ENCODE measurements at regions of chr16 and their contacts with region 1.

Region 1: DNA sequence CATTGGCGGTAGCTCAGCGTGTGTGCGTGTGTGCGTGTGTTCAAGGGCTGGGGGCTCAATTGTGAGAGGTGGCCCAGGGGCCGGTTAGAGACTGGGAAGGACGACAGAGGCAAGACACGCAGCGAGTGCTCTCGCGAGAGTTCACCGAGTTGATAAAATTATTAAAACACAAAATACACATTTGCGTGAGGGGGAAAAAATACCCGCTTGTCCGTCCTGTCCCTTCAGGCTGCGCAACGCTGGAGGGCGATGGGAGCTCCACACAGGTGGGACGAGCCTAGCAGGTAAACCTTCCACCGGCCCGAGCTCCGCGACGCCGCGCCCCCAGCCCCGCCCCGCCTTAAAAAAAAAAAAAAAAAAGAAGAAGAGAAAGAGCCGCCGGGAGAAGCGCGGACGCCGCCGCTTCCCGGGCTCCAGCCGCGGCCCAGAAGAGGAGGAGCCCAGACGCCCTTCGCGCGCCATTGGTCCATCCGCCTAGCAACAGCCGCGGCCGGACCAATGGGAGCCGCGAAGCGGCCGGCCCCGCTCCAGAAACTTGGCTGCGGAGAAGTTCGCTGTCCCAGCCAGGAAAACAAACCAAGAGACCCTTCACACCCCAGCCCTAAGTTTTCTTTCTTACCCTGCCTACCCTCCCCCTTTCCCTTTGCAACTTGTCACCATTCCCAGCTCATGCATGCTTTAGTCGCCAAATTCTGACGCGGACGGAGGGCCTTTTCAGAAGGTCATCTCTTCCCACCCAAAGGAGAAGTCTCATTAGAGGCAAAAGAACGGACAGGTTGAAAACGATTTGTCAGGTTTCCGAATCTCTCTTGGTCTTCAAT is 169.9 kb upstream of the MAF start:
- DNase-seq: peak; percentile 92
- H3K4me3 Mint-ChIP-seq: peak overlapping the region; percentile 88
- H3K27ac Mint-ChIP-seq: peak overlapping the region; percentile 21
- H3K4me1 Mint-ChIP-seq: peaks cover 10% of the 10 kb centered on the region
- H3K27me3 Mint-ChIP-seq: no peaks in the 10 kb centered on the region
- CTCF ChIP-seq: no peak

Region 2: DNA sequence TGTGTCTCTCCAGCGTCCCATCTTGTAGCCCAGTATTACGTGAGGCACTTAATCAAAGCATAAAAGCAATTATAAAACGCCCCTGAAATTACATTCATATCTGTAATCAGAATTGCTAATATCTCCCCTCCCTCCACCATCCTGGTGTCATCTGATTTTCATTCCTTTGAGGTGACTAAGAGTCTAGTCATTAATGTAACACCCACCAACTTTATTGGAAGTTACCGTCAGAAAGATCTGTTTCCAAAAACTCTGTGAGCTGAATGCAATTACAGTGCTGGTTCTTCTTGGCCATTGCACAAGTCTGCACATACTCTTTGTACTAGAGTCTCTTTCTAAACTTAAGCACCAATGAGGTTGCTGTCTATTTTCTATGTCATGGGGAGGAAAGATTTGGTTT is 157.4 kb before region 1 on chr16:
- CTCF ChIA-PET with region 1: no interaction called
- POLR2A ChIA-PET with region 1: no interaction called
- intact Hi-C with region 1: loop called (anchors 5 kb)
- DNase-seq: peak; percentile 41
- H3K4me3 Mint-ChIP-seq: no peak overlapping the region
- H3K27ac Mint-ChIP-seq: peak overlapping the region; percentile 74
- H3K4me1 Mint-ChIP-seq: peaks cover 40% of the 10 kb centered on the region
- H3K27me3 Mint-ChIP-seq: no peaks in the 10 kb centered on the region
- CTCF ChIP-seq: no peak

Region 3: GRCh38 chr16:79735271-79735670 is 35.2 kb before region 1 on chr16:
- CTCF ChIA-PET with region 1: no interaction called
- POLR2A ChIA-PET with region 1: no interaction called
- intact Hi-C with region 1: no loop called
- DNase-seq: no peak
- H3K4me3 Mint-ChIP-seq: no peak overlapping the region
- H3K27ac Mint-ChIP-seq: no peak overlapping the region
- H3K4me1 Mint-ChIP-seq: no peaks in the 10 kb centered on the region
- H3K27me3 Mint-ChIP-seq: no peaks in the 10 kb centered on the region
- CTCF ChIP-seq: no peak

Region 4: DNA sequence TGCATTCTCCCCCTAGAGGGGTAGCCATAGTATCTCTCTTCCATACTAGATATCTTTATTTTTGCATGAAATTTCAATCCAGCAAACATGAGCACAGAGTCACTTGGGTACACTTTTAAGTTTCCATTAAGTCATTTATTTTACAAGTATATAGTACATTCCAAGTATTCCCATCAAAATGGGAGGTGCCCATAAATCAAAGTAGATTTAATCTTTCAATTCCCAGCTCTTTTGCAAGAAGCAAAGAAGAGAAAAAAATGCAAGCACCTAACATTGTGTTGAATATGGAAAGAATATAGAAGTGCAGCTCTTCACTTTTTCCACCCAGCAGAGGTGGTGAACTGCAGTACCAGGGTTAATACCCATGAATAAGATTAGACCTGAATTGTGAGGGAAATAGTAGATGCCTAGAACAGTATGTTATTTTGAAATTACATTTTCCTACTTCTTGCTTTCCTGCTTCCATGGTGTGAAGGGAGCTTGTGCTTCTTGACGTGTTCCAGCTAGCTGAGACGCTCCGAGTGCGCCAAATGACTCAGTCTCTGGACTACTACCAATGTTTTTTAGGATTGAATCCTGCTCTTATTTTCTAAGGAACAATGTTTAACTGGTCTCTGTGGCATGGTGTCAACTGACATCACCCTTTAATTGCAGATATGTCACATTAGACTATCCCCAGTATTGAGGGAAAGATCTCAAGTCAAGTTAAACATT is 18.8 kb before region 1 on chr16:
- CTCF ChIA-PET with region 1: interaction called, 4 read pairs
- POLR2A ChIA-PET with region 1: interaction called, 11 read pairs
- intact Hi-C with region 1: no loop called
- DNase-seq: peak; percentile 79
- H3K4me3 Mint-ChIP-seq: peak overlapping the region; percentile 17
- H3K27ac Mint-ChIP-seq: peak overlapping the region; percentile 9
- H3K4me1 Mint-ChIP-seq: peaks cover 39% of the 10 kb centered on the region
- H3K27me3 Mint-ChIP-seq: no peaks in the 10 kb centered on the region
- CTCF ChIP-seq: no peak

Region 5: GRCh38 chr16:79758615-79759341 is 11.7 kb before region 1 on chr16:
- CTCF ChIA-PET with region 1: interaction called, 4 read pairs
- POLR2A ChIA-PET with region 1: interaction called, 10 read pairs
- intact Hi-C with region 1: no loop called
- DNase-seq: peak; percentile 51
- H3K4me3 Mint-ChIP-seq: peak overlapping the region; percentile 35
- H3K27ac Mint-ChIP-seq: peak overlapping the region; percentile 30
- H3K4me1 Mint-ChIP-seq: peaks cover 34% of the 10 kb centered on the region
- H3K27me3 Mint-ChIP-seq: no peaks in the 10 kb centered on the region
- CTCF ChIP-seq: no peak

Region 6: DNA sequence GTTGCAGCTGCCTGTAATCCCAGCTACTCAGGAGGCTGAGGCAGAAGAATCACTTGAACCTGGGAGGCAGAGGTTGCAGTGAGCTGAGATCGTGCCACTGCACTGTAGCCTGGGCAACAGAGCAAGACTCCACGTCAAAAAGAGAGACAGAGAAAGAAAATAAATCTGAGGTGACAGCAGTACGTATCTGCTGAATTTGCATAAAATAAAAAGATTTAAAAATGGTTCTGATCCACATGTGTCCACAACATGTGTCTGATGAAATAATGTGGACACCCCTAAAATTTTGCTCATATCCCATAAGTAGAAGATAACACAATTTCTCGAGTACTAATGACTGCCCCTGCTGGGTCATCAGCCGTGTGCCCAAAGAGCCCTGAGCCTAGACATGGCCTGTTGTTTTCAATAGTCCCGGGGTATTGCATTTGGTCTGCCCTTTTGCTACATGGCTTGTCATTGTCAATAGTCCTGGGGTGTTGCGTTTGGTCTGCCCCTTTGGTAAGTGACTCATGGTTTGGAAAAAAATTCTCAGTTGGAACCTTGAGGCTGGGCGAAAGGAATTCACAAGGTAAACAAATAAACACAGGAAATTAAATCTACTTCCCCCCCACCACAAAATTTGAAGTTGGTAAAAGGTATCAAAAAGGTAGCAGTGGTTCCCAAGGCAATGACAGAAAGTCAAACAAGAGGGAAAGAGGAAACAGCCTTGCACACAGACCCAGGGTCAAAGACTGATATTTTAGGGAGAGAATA is 264.7 kb after region 1 on chr16:
- CTCF ChIA-PET with region 1: no interaction called
- POLR2A ChIA-PET with region 1: no interaction called
- intact Hi-C with region 1: no loop called
- DNase-seq: peak; percentile 18
- H3K4me3 Mint-ChIP-seq: no peak overlapping the region
- H3K27ac Mint-ChIP-seq: no peak overlapping the region
- H3K4me1 Mint-ChIP-seq: peaks cover 7% of the 10 kb centered on the region
- H3K27me3 Mint-ChIP-seq: no peaks in the 10 kb centered on the region
- CTCF ChIP-seq: no peak

Measured in MCF 10A (cell line).